ENCODE measurements at regions of chr7 and their contacts with region 1.

Region 1: GRCh38 chr7:92313055-92313454 is 67.3 kb downstream of the ANKIB1 start:
- DNase-seq: no peak
- ATAC-seq: no peak
- H3K4me3 ChIP-seq: no peak overlapping the region
- H3K27ac ChIP-seq: no peak overlapping the region
- H3K4me1 ChIP-seq: no peaks in the 10 kb centered on the region
- H3K27me3 ChIP-seq: no peaks in the 10 kb centered on the region
- CTCF ChIP-seq: no peak

Region 2: GRCh38 chr7:92255308-92255707 is 57.7 kb before region 1 on chr7:
- intact Hi-C with region 1: loop called in 1 of 2 experiments (anchors 10 kb)
- DNase-seq: no peak
- ATAC-seq: peak; percentile 62 to 79 (median 68)
- H3K4me3 ChIP-seq: no peak overlapping the region
- H3K27ac ChIP-seq: no peak overlapping the region
- H3K4me1 ChIP-seq: peaks cover 28% of the 10 kb centered on the region
- H3K27me3 ChIP-seq: no peaks in the 10 kb centered on the region
- CTCF ChIP-seq: no peak

Region 3: GRCh38 chr7:92336662-92337340 is 23.7 kb after region 1 on chr7:
- intact Hi-C with region 1: no loop called
- DNase-seq: no peak
- ATAC-seq: no peak
- H3K4me3 ChIP-seq: no peak overlapping the region
- H3K27ac ChIP-seq: no peak overlapping the region
- H3K4me1 ChIP-seq: no peaks in the 10 kb centered on the region
- H3K27me3 ChIP-seq: no peaks in the 10 kb centered on the region
- CTCF ChIP-seq: no peak

Measured in psoas muscle (tissue), 8 donors.